Activated CD4-positive, alpha-beta T cell treated with anti-CD3 and anti-CD28 coated beads, Interleukin-2, amount 10 ng/mL, durations not matched to agents 24 days and 14 days (primary cell): ENCODE measurements at regions of chr5 and their contacts with region 1.

Region 1: GRCh38 chr5:42908509-42909488 is 97.1 kb upstream of the SELENOP start:
- DNase-seq: peak; percentile 96
- H3K4me3 Mint-ChIP-seq: peak overlapping the region; percentile 83
- H3K27ac Mint-ChIP-seq: peak overlapping the region; percentile 1
- H3K4me1 Mint-ChIP-seq: peaks cover 6% of the 10 kb centered on the region
- H3K27me3 Mint-ChIP-seq: peaks cover 35% of the 10 kb centered on the region

Region 2: DNA sequence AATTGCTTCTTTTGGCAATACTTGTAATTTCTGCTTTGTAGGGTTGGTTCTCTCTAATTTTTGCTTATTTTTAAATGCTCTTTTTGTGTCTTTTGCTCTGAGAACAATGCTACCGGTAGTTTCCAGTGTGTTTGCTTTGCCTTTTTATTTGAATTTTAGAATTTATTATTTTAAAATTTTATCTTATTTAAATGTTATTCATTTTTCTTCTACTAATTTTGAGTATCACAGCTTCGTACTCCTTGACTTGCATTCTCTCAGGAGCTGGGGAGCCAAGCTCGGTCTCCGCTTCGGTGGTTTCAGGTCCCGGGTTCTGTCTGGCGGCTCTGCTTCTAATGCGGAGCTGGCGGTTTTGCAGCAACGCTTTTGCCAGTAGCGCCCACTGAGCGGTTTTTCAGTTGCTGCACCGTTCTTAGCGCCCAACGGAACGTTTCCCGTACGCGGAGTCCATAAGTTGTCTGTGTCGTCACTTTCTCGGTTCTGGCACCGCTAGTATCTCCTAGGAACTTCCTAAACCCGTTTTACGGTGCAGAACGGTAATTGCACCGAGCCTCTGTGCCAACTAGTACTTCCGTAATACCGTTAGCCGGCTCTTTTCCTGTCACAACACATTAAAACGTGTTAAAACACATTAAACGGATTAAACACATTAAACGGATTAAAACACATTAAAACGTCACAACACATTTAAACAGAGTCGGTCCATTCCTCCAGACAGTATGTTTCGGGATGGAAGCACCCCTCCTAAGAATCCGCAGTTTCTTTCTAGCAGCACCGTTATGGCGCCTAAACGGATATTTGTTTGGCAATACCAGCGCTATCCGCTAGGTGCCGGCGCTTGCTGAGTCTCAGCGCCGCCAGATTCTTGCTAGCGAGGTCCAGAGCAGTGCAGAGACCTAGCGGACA is 85.7 kb after region 1 on chr5:
- intact Hi-C with region 1: loop called (anchors 1 kb)
- DNase-seq: peak; percentile 97
- H3K4me3 Mint-ChIP-seq: peak overlapping the region; percentile 96
- H3K27ac Mint-ChIP-seq: peak overlapping the region; percentile 100
- H3K4me1 Mint-ChIP-seq: peaks cover 40% of the 10 kb centered on the region
- H3K27me3 Mint-ChIP-seq: no peaks in the 10 kb centered on the region

Region 3: DNA sequence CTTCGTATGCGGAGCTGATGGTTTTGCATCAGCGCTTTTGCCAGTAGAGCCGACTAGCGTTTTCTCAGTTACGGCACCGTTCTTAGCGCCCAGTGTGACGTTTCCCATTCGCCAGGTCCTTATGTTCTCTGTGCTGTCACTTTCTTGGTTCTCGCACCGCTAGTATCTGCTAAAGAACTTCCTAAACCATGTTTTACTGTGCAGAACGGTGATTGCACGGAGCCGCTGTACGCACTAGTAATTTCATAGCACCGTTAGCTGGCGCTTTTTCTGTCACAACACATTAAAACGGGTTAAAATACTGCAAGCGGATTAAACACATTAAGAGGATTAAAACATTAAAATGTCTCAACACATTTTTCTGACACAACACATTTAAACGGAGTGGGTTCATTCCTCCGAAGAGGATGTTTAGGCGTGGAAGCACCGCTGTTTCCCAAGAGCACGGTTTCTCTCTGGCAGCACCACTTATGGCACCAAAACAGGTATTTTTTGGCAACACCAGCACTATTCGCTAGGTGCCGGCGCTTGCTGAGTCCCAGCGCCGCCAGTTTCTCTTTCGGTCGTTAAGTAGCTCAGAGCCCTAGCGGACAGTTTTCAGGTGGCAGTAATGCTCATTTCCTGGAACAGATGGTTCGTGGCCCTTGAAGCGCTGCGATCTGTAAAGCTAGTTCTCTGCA is 111.0 kb after region 1 on chr5:
- intact Hi-C with region 1: loop called (anchors 5 kb)
- DNase-seq: peak; percentile 95
- H3K4me3 Mint-ChIP-seq: peak overlapping the region; percentile 97
- H3K27ac Mint-ChIP-seq: peak overlapping the region; percentile 100
- H3K4me1 Mint-ChIP-seq: peaks cover 45% of the 10 kb centered on the region
- H3K27me3 Mint-ChIP-seq: no peaks in the 10 kb centered on the region

Region 4: GRCh38 chr5:43040287-43041098 is 131.7 kb after region 1 on chr5 and contains the start of gene ANXA2R:
- intact Hi-C with region 1: loop called (anchors 1 kb)
- DNase-seq: peak; percentile 98
- H3K4me3 Mint-ChIP-seq: peak within 1 kb of the TSS; percentile 94
- H3K27ac Mint-ChIP-seq: peak within 1 kb of the TSS; percentile 96
- H3K4me1 Mint-ChIP-seq: peaks cover 46% of the 10 kb centered on the region
- H3K27me3 Mint-ChIP-seq: no peaks in the 10 kb centered on the region
- total RNA-seq, gene ANXA2R: 1.1 and 1.2 TPM in 2 replicates

Region 5: DNA sequence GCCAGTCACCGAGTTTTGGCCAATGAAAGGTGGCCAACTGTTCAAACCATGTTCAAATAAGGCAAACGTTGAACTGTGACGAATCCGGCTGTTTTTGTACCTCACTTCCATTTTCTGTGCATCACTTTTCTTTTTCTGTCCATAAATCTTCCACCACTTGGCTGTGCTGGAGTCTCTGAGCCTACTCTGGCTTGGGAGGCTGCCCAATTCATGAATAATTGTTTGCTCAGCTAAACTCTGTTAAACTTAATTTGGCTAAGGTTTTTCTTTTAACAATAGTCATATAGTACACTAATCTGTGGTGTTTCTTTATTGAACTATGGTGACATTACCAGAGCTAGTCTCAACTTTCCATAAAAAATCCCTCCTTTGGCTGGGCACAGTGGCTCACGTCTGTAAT is 294.6 kb after region 1 on chr5:
- intact Hi-C with region 1: no loop called
- DNase-seq: no peak
- H3K4me3 Mint-ChIP-seq: no peak overlapping the region
- H3K27ac Mint-ChIP-seq: no peak overlapping the region
- H3K4me1 Mint-ChIP-seq: no peaks in the 10 kb centered on the region
- H3K27me3 Mint-ChIP-seq: peaks cover 2% of the 10 kb centered on the region